ENCODE measurements at regions of chr19 and their contacts with region 1.

Region 1: GRCh38 chr19:54231077-54231931 is 8.5 kb upstream of the LILRB3 start:
- DNase-seq: peak; percentile 92 to 95 (median 94)
- ATAC-seq: peak; percentile 89 to 94
- H3K4me3 ChIP-seq: no peak overlapping the region
- H3K27ac ChIP-seq: no peak overlapping the region
- H3K4me1 ChIP-seq: no peaks in the 10 kb centered on the region
- H3K27me3 ChIP-seq: no peaks in the 10 kb centered on the region

Region 2: GRCh38 chr19:52809801-52810200 is 1421.5 kb before region 1 on chr19:
- intact Hi-C with region 1: no loop called
- DNase-seq: peak in 1 of 3 donors; percentile 55
- ATAC-seq: peak in 1 of 2 donors; percentile 38
- H3K4me3 ChIP-seq: no peak overlapping the region
- H3K27ac ChIP-seq: no peak overlapping the region
- H3K4me1 ChIP-seq: no peaks in the 10 kb centered on the region
- H3K27me3 ChIP-seq: no peaks in the 10 kb centered on the region

Region 3: DNA sequence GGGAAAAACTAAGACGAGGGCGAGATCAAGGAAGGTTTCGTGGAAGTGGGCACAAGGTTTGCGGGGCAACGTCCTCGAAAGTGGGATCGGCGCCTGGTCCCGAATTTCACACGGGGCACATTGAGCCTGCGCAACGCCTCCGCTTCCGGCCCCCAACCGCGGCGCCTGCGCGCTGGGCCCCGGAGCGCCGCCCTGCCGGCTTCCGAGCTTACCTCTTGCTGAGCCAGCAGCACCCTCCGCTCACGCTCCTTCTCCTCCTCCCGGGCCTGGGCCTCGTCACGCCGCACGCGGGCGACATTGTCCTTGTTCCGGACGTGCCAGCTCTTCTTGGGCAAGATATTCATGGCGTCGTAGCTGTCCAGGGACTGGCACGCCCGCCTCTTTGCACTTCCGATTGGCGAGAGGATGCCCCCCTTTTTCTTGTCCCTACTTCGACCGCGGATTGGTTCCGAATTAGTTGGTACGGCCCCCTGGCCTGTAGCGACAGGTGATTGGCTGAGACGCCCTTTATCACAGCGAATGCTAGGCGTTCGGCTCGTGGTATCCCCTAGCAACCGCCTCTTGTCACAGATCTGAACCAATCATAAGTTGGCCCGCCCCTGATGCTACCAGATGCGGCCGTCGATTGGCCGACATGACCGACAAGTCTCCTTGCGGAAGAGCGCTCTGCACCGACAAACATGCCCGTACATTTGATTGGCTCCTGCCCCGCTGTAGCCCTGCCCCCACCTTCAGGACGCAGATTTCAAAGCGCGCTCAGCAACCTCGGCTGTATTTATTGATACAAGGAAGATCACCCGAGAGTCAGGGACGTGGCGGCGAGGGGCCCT is 71.7 kb before region 1 on chr19 and contains the start of gene LENG1:
- intact Hi-C with region 1: loop called in 1 of 4 experiments (anchors 10 kb)
- DNase-seq: peak; percentile 99 to 100 (median 100)
- ATAC-seq: peak; percentile 96
- H3K4me3 ChIP-seq: peak within 1 kb of the TSS; percentile 56
- H3K27ac ChIP-seq: peak within 1 kb of the TSS; percentile 97
- H3K4me1 ChIP-seq: peaks cover 8% of the 10 kb centered on the region
- H3K27me3 ChIP-seq: no peaks in the 10 kb centered on the region
- total RNA-seq, gene LENG1: 5.3 to 7.6 (median 7.0) TPM

Region 4: DNA sequence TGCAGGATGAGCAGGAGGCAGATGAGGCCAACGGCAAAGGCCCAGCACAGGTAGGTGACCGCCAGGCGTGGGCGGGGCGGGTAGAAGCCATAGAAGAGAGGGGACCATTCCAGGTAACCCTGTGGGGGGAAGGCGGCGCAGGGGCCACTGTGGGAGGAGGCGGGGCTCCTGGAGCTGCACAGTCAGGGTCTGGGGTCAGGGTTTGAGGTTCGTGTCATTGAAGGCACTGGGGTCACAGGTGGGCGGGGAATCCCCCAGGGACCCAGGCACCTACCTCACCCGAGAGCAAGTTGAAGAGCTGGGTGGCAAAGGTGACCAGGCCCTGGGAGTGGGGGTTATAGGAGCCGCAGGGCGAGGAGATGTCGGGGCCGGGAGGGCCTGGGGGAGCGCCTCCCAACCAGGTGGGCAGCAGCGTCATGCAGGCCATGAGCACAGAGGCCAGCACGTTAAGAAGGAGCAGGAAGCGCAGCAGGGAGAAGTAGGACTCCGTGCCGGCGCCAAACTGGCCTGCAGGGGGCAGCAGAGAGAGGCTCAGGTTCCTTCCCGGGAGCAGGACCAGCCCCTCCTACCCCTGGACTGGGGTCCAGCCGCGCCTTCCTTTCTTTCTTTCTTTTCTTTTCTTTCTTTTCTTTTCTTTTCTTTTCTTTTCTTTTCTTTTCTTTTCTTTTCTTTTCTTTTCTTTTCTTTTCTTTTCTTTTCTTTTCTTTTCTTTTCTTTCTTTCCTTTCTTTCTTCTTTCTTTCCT is 63.0 kb before region 1 on chr19:
- intact Hi-C with region 1: loop called (anchors 2 to 10 kb)
- DNase-seq: peak; percentile 92 to 98 (median 98)
- ATAC-seq: peak; percentile 82 to 88
- H3K4me3 ChIP-seq: no peak overlapping the region
- H3K27ac ChIP-seq: no peak overlapping the region
- H3K4me1 ChIP-seq: no peaks in the 10 kb centered on the region
- H3K27me3 ChIP-seq: no peaks in the 10 kb centered on the region

Measured in right cardiac atrium (tissue), 5 donors.